ENCODE measurements at regions of chr22 and their contacts with region 1.

Region 1: DNA sequence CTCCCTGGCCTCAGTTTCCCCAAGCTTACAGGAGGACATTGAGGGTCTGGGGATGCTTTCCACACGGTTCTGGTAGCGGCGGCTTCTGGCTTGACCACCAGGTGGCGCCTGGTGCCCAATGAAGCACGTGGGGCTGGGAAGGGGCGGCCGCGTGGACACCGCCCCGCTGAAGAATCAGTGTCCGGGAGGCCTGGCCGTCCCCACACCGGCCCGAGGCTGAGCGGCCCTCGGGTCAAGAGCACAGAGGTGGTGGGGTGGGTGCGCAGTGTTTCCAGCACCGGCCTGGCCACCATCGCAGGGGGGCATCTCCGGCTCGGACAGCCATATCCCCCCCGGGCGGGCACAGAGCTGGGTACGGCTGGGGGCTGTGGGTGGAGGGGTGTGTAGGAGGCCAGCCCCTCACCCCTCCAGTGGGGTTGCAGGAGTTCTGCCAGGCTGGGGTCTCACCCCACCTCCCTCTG is 27.8 kb upstream of the PPARA start:
- DNase-seq: peak; percentile 69
- ATAC-seq: peak; percentile 81
- H3K4me3 Mint-ChIP-seq: no peak overlapping the region
- H3K27ac Mint-ChIP-seq: no peak overlapping the region
- H3K4me1 Mint-ChIP-seq: no peaks in the 10 kb centered on the region
- H3K27me3 Mint-ChIP-seq: peaks cover 2% of the 10 kb centered on the region
- CTCF ChIP-seq: peak; percentile 95

Region 2: DNA sequence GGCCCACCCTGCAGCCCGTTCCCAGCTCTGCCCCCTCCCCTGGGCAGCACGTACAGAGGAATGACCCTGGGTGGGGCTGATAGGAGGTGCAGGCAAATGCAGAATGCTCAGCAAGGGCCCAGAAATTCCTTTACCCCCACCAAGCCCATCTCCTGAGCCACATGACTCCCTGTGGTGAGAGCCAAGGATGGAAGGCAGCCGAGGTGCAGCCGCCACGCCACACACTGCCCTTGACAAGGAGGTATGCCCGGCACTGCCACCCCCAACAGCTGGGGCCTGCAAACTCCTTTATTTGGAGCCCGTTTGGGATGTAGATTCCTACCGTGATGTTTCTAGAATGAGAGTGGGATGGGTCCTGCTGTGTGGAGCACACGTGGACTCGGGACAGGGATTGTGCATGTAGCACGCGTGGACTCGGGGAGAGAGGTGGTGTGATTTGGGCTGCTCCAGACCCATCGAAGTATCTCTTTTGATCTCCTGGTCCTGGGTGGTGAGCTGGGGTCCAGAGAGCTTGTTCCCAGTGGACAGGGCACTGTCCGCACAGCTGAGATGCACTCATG is 187.1 kb after region 1 on chr22:
- CTCF ChIA-PET with region 1: interaction called, 61 read pairs
- POLR2A ChIA-PET with region 1: interaction called, 3 read pairs
- intact Hi-C with region 1: no loop called
- DNase-seq: no peak
- ATAC-seq: no peak
- H3K4me3 Mint-ChIP-seq: no peak overlapping the region
- H3K27ac Mint-ChIP-seq: no peak overlapping the region
- H3K4me1 Mint-ChIP-seq: no peaks in the 10 kb centered on the region
- H3K27me3 Mint-ChIP-seq: no peaks in the 10 kb centered on the region
- CTCF ChIP-seq: no peak

Region 3: GRCh38 chr22:46317646-46318045 is 195.1 kb after region 1 on chr22:
- CTCF ChIA-PET with region 1: interaction called, 61 read pairs
- POLR2A ChIA-PET with region 1: no interaction called
- intact Hi-C with region 1: no loop called
- DNase-seq: no peak
- ATAC-seq: no peak
- H3K4me3 Mint-ChIP-seq: no peak overlapping the region
- H3K27ac Mint-ChIP-seq: no peak overlapping the region
- H3K4me1 Mint-ChIP-seq: no peaks in the 10 kb centered on the region
- H3K27me3 Mint-ChIP-seq: no peaks in the 10 kb centered on the region
- CTCF ChIP-seq: no peak